ENCODE measurements at regions of chr10 and their contacts with region 1.

Region 1: GRCh38 chr10:28343987-28344897 is 41.4 kb upstream of the MPP7 start:
- DNase-seq: no peak
- H3K4me3 ChIP-seq: no peak overlapping the region
- H3K27ac ChIP-seq: no peak overlapping the region
- H3K4me1 ChIP-seq: no peaks in the 10 kb centered on the region
- H3K27me3 ChIP-seq: no peaks in the 10 kb centered on the region
- CTCF ChIP-seq: no peak
- EP300 ChIP-seq: no peak
- POLR2A ChIP-seq: no peak

Region 2: DNA sequence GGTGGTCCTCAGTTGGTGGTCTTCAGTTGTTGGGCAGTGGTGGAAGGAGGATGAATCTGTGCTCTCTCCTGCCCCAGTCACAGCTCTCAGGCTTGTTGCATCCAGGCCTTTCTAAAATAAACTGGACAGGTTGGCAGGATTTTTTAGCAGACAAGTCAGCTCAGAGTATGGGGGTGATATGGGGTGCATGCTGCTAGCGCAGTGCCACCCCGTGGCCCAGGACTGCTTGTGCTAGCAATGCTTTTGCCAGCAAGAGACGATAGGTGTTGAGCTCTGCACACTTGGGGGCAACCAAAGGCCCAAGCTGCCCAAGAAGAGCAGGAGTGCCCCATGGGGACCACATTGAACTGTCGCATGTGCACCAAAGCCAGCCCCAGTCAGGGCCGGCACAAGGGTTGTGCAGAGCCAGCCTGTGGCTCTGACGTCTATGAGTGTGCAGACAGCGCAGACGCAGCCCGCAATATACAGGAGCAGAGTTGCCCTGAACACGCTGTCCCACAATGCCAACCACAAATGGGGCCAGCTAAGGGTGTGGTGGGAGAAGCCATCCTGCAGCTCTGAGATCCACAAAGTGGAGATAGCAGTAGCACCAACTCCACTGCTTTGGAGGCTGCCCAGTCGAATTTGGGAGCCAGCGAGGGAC is 1696.5 kb before region 1 on chr10:
- intact Hi-C with region 1: no loop called
- DNase-seq: no peak
- H3K4me3 ChIP-seq: no peak overlapping the region
- H3K27ac ChIP-seq: no peak overlapping the region
- H3K4me1 ChIP-seq: no peaks in the 10 kb centered on the region
- H3K27me3 ChIP-seq: no peaks in the 10 kb centered on the region
- CTCF ChIP-seq: no peak
- EP300 ChIP-seq: no peak
- POLR2A ChIP-seq: no peak

Region 3: GRCh38 chr10:28410420-28411135 is 66.3 kb after region 1 on chr10:
- intact Hi-C with region 1: no loop called
- DNase-seq: no peak
- H3K4me3 ChIP-seq: no peak overlapping the region
- H3K27ac ChIP-seq: no peak overlapping the region
- H3K4me1 ChIP-seq: no peaks in the 10 kb centered on the region
- H3K27me3 ChIP-seq: no peaks in the 10 kb centered on the region
- CTCF ChIP-seq: no peak
- EP300 ChIP-seq: no peak
- POLR2A ChIP-seq: no peak

Region 4: GRCh38 chr10:29285624-29286051 is 941.4 kb after region 1 on chr10:
- intact Hi-C with region 1: loop called in 1 of 4 experiments (anchors 10 kb)
- DNase-seq: no peak
- H3K4me3 ChIP-seq: no peak overlapping the region
- H3K27ac ChIP-seq: no peak overlapping the region
- H3K4me1 ChIP-seq: no peaks in the 10 kb centered on the region
- H3K27me3 ChIP-seq: no peaks in the 10 kb centered on the region
- CTCF ChIP-seq: no peak
- EP300 ChIP-seq: no peak
- POLR2A ChIP-seq: no peak

Measured in ovary (tissue), 10 donors.